ENCODE measurements at regions of chr1 and their contacts with region 1.

Region 1: GRCh38 chr1:158124999-158125398 is 55.7 kb upstream of the CD1D start:
- DNase-seq: peak; percentile 38 to 73 (median 53)
- H3K4me3 ChIP-seq: no peak overlapping the region
- H3K4me3 Mint-ChIP-seq: no peak overlapping the region
- H3K27ac ChIP-seq: no peak overlapping the region
- H3K27ac Mint-ChIP-seq: no peak overlapping the region
- H3K4me1 ChIP-seq: no peaks in the 10 kb centered on the region
- H3K4me1 Mint-ChIP-seq: peaks cover 0 to 2% (median 0%) of the 10 kb centered on the region in 3 donors
- H3K27me3 ChIP-seq: peaks cover 6% of the 10 kb centered on the region
- H3K27me3 Mint-ChIP-seq: peaks cover 18 to 49% of the 10 kb centered on the region in 2 donors

Region 2: GRCh38 chr1:157963713-157964112 is 161.3 kb before region 1 on chr1:
- CTCF ChIA-PET with region 1: interaction called, 10 read pairs
- POLR2A ChIA-PET with region 1: no interaction called
- DNase-seq: peak in 4 of 5 donors; percentile 7 to 26 (median 17)
- H3K4me3 ChIP-seq: no peak overlapping the region
- H3K4me3 Mint-ChIP-seq: no peak overlapping the region
- H3K27ac ChIP-seq: no peak overlapping the region
- H3K27ac Mint-ChIP-seq: no peak overlapping the region
- H3K4me1 ChIP-seq: no peaks in the 10 kb centered on the region
- H3K4me1 Mint-ChIP-seq: no peaks in the 10 kb centered on the region
- H3K27me3 ChIP-seq: no peaks in the 10 kb centered on the region
- H3K27me3 Mint-ChIP-seq: peaks cover 6 to 49% of the 10 kb centered on the region in 2 donors

Region 3: DNA sequence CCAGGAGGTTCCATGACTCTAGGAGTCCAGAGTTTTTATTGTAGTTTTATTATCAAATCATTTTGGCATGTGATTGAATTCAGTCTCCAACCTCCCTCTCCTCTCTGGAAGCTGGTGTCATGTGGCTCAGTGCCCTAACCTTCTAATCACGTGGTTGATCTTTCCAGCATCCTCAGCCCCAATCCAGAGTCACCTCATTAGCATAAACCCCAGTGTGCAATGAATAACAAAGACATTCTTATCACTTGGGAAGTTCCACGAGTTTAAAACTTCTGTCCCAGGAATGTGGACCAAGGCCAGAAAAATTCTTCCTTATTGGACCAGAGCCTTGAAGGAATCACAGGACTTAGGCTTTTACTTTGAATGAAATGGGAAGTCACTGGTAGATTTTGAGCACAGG is 79.4 kb before region 1 on chr1:
- CTCF ChIA-PET with region 1: no interaction called
- POLR2A ChIA-PET with region 1: no interaction called
- DNase-seq: no peak
- H3K4me3 ChIP-seq: no peak overlapping the region
- H3K4me3 Mint-ChIP-seq: no peak overlapping the region
- H3K27ac ChIP-seq: no peak overlapping the region
- H3K27ac Mint-ChIP-seq: no peak overlapping the region
- H3K4me1 ChIP-seq: no peaks in the 10 kb centered on the region
- H3K4me1 Mint-ChIP-seq: no peaks in the 10 kb centered on the region
- H3K27me3 ChIP-seq: no peaks in the 10 kb centered on the region
- H3K27me3 Mint-ChIP-seq: peaks cover 7 to 39% of the 10 kb centered on the region in 2 donors

Region 4: GRCh38 chr1:158112994-158113758 is 11.8 kb before region 1 on chr1:
- CTCF ChIA-PET with region 1: interaction called, 19 read pairs
- POLR2A ChIA-PET with region 1: no interaction called
- DNase-seq: peak in 2 of 5 donors; percentile 24 to 39
- H3K4me3 ChIP-seq: peak overlapping the region; percentile 42
- H3K4me3 Mint-ChIP-seq: peak overlapping the region; percentile 32 to 83 (median 79)
- H3K27ac ChIP-seq: no peak overlapping the region
- H3K27ac Mint-ChIP-seq: peak overlapping the region in 1 of 8 donors; percentile 9
- H3K4me1 ChIP-seq: peaks cover 5% of the 10 kb centered on the region
- H3K4me1 Mint-ChIP-seq: peaks cover 15 to 19% (median 17%) of the 10 kb centered on the region in 3 donors
- H3K27me3 ChIP-seq: peaks cover 7% of the 10 kb centered on the region
- H3K27me3 Mint-ChIP-seq: peaks cover 34 to 53% of the 10 kb centered on the region in 2 donors

Measured in CD8-positive, alpha-beta memory T cell (primary cell).